ENCODE measurements at regions of chr1 and their contacts with region 1.

Region 1: GRCh38 chr1:35564037-35564883 is 6.7 kb downstream of the NCDN start:
- DNase-seq: peak; percentile 90
- H3K4me3 Mint-ChIP-seq: no peak overlapping the region
- H3K27ac Mint-ChIP-seq: no peak overlapping the region
- H3K4me1 Mint-ChIP-seq: peaks cover 32% of the 10 kb centered on the region
- H3K27me3 Mint-ChIP-seq: no peaks in the 10 kb centered on the region
- CTCF ChIP-seq: peak; percentile 79

Region 2: DNA sequence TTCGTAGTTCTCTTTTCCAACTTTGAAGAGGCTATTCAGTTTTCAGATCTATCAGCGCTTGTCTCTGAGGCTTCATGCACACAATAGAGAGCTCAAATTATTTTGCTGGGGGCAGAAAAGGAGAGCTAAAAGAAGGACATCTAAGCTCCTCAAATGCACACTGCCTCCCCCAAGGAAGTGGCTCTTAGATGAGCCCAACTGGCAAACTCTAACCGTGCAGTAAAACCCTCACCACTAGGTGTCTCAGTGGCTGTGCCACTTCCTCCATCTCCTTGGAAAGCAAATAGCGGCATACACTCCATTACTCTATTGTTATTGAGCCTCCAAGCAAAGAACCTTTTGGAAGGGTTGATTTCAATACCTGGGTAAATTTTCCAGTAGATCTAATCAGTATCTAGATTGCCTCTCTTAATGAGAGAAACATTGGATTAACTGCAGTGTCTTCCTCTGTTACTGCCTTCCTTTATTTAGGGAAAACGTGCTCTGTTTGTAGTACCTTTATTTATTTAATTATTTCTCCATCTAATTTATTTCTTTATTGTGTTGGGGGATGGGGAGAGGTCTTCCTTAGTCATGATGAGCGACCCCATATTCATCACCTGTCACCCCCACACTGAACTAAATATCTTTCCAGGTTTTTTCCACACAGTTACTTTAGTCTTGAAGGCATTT is 362.1 kb before region 1 on chr1:
- CTCF ChIA-PET with region 1: interaction called, 4 read pairs
- POLR2A ChIA-PET with region 1: interaction called, 3 read pairs
- intact Hi-C with region 1: loop called (anchors 2 kb)
- DNase-seq: peak; percentile 84
- H3K4me3 Mint-ChIP-seq: no peak overlapping the region
- H3K27ac Mint-ChIP-seq: no peak overlapping the region
- H3K4me1 Mint-ChIP-seq: no peaks in the 10 kb centered on the region
- H3K27me3 Mint-ChIP-seq: no peaks in the 10 kb centered on the region
- CTCF ChIP-seq: peak; percentile 86

Region 3: GRCh38 chr1:35577071-35577998 is 13.1 kb after region 1 on chr1:
- CTCF ChIA-PET with region 1: interaction called, 30 read pairs
- POLR2A ChIA-PET with region 1: no interaction called
- intact Hi-C with region 1: no loop called
- DNase-seq: no peak
- H3K4me3 Mint-ChIP-seq: no peak overlapping the region
- H3K27ac Mint-ChIP-seq: no peak overlapping the region
- H3K4me1 Mint-ChIP-seq: peaks cover 11% of the 10 kb centered on the region
- H3K27me3 Mint-ChIP-seq: peaks cover 4% of the 10 kb centered on the region
- CTCF ChIP-seq: no peak

Region 4: GRCh38 chr1:35622510-35623178 is 58.4 kb after region 1 on chr1:
- CTCF ChIA-PET with region 1: no interaction called
- POLR2A ChIA-PET with region 1: no interaction called
- intact Hi-C with region 1: no loop called
- DNase-seq: no peak
- H3K4me3 Mint-ChIP-seq: no peak overlapping the region
- H3K27ac Mint-ChIP-seq: no peak overlapping the region
- H3K4me1 Mint-ChIP-seq: peaks cover 7% of the 10 kb centered on the region
- H3K27me3 Mint-ChIP-seq: no peaks in the 10 kb centered on the region
- CTCF ChIP-seq: no peak

Region 5: DNA sequence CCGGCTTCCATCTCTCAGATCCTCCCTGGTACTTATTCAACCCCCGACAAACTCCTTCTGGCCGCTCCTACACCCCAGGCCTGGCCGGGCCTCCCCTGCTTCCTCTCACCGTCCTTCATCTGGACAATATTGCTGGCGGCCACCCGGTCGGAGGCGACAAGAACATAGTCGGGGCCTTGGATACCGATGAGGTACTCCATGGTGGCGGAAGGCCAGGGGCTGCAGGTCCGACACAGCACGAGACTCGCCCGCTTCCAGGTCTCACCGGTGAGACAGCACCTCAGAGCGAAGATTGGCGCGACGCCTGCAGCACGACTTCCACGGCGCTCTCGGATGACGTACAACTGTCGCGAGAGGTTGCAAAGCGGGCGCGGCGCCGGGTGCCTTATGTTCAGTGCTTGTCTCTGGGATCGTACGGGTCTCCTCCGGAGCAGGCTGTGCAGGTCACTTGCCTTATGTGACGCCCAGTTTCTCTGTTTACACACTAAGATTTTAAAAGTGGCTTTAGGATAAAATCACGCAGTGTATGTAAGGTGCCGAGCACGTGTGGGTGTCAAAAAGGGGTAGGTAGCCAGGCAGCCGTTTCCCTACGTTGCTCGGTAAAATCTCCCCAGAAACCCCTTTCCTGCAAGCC is 77.1 kb after region 1 on chr1 and contains the start of gene PSMB2:
- CTCF ChIA-PET with region 1: interaction called, 11 read pairs
- POLR2A ChIA-PET with region 1: interaction called, 3 read pairs
- intact Hi-C with region 1: loop called (anchors 5 kb)
- DNase-seq: peak; percentile 96
- H3K4me3 Mint-ChIP-seq: peak within 1 kb of the TSS; percentile 99
- H3K27ac Mint-ChIP-seq: peak within 1 kb of the TSS; percentile 100
- H3K4me1 Mint-ChIP-seq: peaks cover 7% of the 10 kb centered on the region
- H3K27me3 Mint-ChIP-seq: peaks cover 12% of the 10 kb centered on the region
- CTCF ChIP-seq: no peak
- total RNA-seq, gene PSMB2: 82.6 and 93.9 TPM in 2 replicates

Region 6: DNA sequence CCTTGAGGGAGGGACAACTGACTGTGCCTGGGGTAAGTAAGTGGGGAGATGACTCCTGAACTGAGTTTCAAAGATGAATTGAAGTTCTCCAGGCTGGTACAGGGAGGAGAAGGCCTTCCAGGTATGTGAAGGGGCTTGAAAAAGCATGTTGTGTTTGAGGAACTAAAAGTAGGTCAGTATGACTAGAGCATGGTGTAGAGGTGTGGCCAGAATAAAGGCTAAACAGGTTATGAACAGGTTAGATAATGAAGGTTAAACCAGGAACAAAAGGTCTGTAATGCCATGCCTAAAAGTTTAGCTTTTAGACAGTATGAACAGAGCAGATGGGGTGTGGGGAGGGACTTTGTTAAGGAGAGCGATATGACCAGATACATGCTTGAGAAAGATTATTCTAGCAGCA is 212.8 kb after region 1 on chr1:
- CTCF ChIA-PET with region 1: interaction called, 11 read pairs
- POLR2A ChIA-PET with region 1: no interaction called
- intact Hi-C with region 1: loop called (anchors 1 kb)
- DNase-seq: no peak
- H3K4me3 Mint-ChIP-seq: no peak overlapping the region
- H3K27ac Mint-ChIP-seq: no peak overlapping the region
- H3K4me1 Mint-ChIP-seq: no peaks in the 10 kb centered on the region
- H3K27me3 Mint-ChIP-seq: no peaks in the 10 kb centered on the region
- CTCF ChIP-seq: no peak

Measured in MCF 10A (cell line).